ENCODE measurements at regions of chr12 and their contacts with region 1.

Region 1: GRCh38 chr12:14239350-14239934 is 126.0 kb upstream of the ATF7IP start:
- DNase-seq: peak; percentile 47
- CTCF ChIP-seq: no peak

Region 2: GRCh38 chr12:14099994-14100393 is 139.4 kb before region 1 on chr12:
- CTCF ChIA-PET with region 1: no interaction called
- POLR2A ChIA-PET with region 1: no interaction called
- DNase-seq: no peak
- CTCF ChIP-seq: no peak

Region 3: GRCh38 chr12:14111230-14111865 is 128.1 kb before region 1 on chr12:
- CTCF ChIA-PET with region 1: no interaction called
- POLR2A ChIA-PET with region 1: no interaction called
- DNase-seq: peak; percentile 64
- CTCF ChIP-seq: peak; percentile 57

Region 4: GRCh38 chr12:14365294-14366208 is 126.1 kb after region 1 on chr12 and contains the start of gene ATF7IP:
- CTCF ChIA-PET with region 1: interaction called, 11 read pairs
- POLR2A ChIA-PET with region 1: interaction called, 3 read pairs
- DNase-seq: peak; percentile 89
- CTCF ChIP-seq: peak; percentile 38

Region 5: DNA sequence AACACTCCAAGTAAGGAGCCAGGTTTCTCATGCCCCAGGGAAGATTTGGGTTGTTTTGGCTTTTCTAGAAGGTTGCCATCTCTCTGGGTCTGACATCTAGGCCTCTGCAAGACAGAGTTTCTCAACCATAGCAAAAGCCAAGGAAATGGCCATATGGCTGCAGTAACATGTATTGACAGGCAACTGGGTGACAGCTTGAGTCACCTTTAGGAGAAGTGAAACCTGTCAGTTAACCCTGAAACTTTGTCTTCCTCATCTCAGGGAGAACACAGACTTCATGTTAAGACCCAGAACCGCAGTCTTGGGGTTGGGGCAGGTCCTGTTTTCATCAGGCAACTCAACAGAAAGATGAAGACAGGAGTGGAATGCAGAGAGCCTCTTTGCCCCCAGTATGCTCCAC is 374.3 kb after region 1 on chr12:
- CTCF ChIA-PET with region 1: interaction called, 17 read pairs
- POLR2A ChIA-PET with region 1: no interaction called
- DNase-seq: peak; percentile 53
- CTCF ChIP-seq: no peak

Region 6: GRCh38 chr12:14664510-14664909 is 425.1 kb after region 1 on chr12:
- CTCF ChIA-PET with region 1: interaction called, 18 read pairs
- POLR2A ChIA-PET with region 1: no interaction called
- DNase-seq: peak; percentile 50
- CTCF ChIP-seq: peak; percentile 70

Region 7: DNA sequence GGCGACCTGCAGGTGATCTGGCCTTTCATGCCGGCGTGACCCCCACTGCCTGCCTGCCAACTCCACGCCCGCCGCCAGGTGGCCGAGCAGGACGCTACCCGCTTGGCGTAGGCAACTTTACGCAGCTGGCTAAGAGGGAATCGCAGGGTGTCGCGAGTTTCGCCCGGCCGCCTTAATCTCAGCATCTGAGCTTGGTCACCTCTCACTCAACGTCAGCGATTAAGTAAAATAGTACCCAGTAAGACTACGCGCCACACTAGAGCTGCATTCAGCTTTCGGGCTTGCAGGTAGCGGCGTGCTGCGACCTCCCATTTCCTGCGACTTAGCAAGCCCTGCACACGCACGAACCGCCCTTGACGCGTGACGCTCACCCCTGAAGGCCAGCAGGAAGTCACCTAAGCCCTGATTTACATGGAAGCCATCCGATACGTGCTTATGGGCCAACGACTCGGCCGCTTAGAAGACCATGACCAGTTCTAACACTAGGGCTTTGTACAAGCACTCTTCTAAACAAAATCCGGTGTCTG is 530.6 kb after region 1 on chr12:
- CTCF ChIA-PET with region 1: interaction called, 14 read pairs
- POLR2A ChIA-PET with region 1: interaction called, 3 read pairs
- DNase-seq: peak; percentile 74
- CTCF ChIP-seq: peak; percentile 88